IMR-90 (cell line): ENCODE measurements at regions of chr12 and their contacts with region 1.

Region 1: GRCh38 chr12:55738123-55739024 is 4.5 kb upstream of the GDF11 start:
- DNase-seq: peak; percentile 82
- ATAC-seq: peak; percentile 75
- H3K4me3 ChIP-seq: peak overlapping the region; percentile 68
- H3K27ac ChIP-seq: peak overlapping the region; percentile 47
- H3K4me1 ChIP-seq: peaks cover 6% of the 10 kb centered on the region
- H3K27me3 ChIP-seq: no peaks in the 10 kb centered on the region
- CTCF ChIP-seq: peak; percentile 93
- POLR2A ChIP-seq: no peak
- RAD21 ChIP-seq: peak; percentile 89

Region 2: DNA sequence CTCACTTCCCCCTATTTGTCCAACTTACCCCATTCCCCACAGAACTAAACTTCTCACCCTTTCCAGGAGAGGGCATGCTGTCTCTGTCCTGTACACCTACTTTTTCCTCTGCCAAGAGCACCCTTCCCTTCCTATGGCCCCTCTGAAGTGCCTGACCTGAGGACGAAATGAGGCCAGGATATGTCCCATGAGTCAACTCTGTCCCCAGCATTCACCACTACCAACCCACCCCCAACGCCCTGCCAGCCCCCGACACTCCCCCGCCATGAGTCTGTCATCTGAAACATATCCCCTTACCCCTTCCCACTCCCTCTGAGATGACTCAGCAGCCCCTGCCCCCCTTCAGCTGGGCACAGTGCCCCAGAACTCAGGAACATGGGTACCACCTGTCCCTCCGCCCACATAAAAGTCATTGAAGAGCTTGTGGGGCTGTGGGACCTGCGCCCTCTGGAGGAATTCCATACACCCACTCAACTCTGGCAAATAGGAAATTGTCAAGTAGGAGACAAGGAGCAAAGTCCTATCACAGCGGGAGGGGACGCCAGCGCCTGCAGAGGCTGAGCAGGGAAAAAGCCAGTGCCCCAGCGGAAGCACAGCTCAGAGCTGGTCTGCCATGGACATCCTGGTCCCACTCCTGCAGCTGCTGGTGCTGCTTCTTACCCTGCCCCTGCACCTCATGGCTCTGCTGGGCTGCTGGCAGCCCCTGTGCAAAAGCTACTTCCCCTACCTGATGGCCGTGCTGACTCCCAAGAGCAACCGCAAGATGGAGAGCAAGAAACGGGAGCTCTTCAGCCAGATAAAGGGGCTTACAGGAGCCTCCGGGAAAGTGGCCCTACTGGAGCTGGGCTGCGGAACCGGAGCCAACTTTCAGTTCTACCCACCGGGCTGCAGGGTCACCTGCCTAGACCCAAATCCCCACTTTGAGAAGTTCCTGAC is 57.0 kb before region 1 on chr12:
- CTCF ChIA-PET with region 1: interaction called, 3 read pairs
- POLR2A ChIA-PET with region 1: no interaction called
- dilution Hi-C with region 1: no loop called
- in situ Hi-C with region 1: no loop called
- intact Hi-C with region 1: loop called (anchors 1 kb)
- DNase-seq: peak; percentile 51
- ATAC-seq: peak; percentile 75
- H3K4me3 ChIP-seq: no peak overlapping the region
- H3K27ac ChIP-seq: no peak overlapping the region
- H3K4me1 ChIP-seq: peaks cover 2% of the 10 kb centered on the region
- H3K27me3 ChIP-seq: peaks cover 12% of the 10 kb centered on the region
- CTCF ChIP-seq: peak; percentile 35
- POLR2A ChIP-seq: no peak
- RAD21 ChIP-seq: peak; percentile 52

Region 3: GRCh38 chr12:55817346-55818139 is 79.2 kb after region 1 on chr12 and contains the starts of genes ORMDL2 and SARNP:
- CTCF ChIA-PET with region 1: interaction called, 4 read pairs
- POLR2A ChIA-PET with region 1: no interaction called
- dilution Hi-C with region 1: no loop called
- in situ Hi-C with region 1: no loop called
- intact Hi-C with region 1: loop called (anchors 5 kb)
- DNase-seq: peak; percentile 100
- ATAC-seq: peak; percentile 97
- H3K4me3 ChIP-seq: peak within 1 kb of the TSS; percentile 63
- H3K27ac ChIP-seq: peak within 1 kb of the TSS; percentile 84
- H3K4me1 ChIP-seq: peaks cover 7% of the 10 kb centered on the region
- H3K27me3 ChIP-seq: no peaks in the 10 kb centered on the region
- CTCF ChIP-seq: no peak
- POLR2A ChIP-seq: peak; percentile 74; the same call in 1 of the 2 replicates
- RAD21 ChIP-seq: no peak
- total RNA-seq, gene ORMDL2: 20.4 and 23.3 TPM in 2 replicates
- total RNA-seq, gene SARNP: 46.8 and 132 TPM in 2 replicates

Region 4: GRCh38 chr12:55940065-55940732 is 201.8 kb after region 1 on chr12:
- CTCF ChIA-PET with region 1: interaction called, 5 read pairs
- POLR2A ChIA-PET with region 1: no interaction called
- dilution Hi-C with region 1: no loop called
- in situ Hi-C with region 1: loop called (anchors 5 kb)
- intact Hi-C with region 1: loop called (anchors 1 kb)
- DNase-seq: peak; percentile 81
- ATAC-seq: peak; percentile 98
- H3K4me3 ChIP-seq: no peak overlapping the region
- H3K27ac ChIP-seq: no peak overlapping the region
- H3K4me1 ChIP-seq: peaks cover 4% of the 10 kb centered on the region
- H3K27me3 ChIP-seq: no peaks in the 10 kb centered on the region
- CTCF ChIP-seq: peak; percentile 90
- POLR2A ChIP-seq: no peak
- RAD21 ChIP-seq: peak; percentile 94

Region 5: DNA sequence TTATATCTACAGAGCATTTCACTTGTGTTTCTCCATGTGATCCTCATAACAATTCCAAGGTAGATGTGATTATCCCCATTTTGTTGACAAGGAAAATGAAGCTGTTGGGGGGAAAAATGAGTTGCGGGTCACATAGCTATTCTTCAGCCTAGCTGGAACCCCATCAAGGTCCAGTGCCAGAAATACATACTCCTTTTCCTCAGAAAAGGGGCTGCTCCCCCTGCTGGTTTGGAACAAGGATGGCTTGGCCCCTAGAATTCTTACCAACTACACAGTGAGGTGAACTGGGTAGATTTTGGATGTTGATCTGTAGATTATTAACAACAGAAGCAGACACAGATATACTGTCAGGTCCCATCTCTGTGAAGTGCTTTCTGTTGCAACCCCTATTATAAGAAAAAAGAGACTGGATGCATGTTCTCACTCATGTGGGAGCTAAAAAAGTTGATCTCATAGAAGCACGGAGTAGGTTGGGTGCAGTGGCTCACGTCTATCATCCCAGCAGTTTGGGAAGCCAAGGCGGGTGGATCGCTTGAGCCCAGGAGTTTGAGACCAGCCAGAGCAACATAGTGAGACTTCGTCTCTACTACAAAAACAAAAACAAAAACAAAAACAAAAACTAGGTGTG is 291.4 kb after region 1 on chr12:
- CTCF ChIA-PET with region 1: interaction called, 5 read pairs
- POLR2A ChIA-PET with region 1: no interaction called
- dilution Hi-C with region 1: no loop called
- in situ Hi-C with region 1: no loop called
- intact Hi-C with region 1: loop called (anchors 1 kb)
- DNase-seq: peak; percentile 67
- ATAC-seq: peak; percentile 96
- H3K4me3 ChIP-seq: no peak overlapping the region
- H3K27ac ChIP-seq: no peak overlapping the region
- H3K4me1 ChIP-seq: peaks cover 2% of the 10 kb centered on the region; the same call in 1 of the 2 replicates
- H3K27me3 ChIP-seq: no peaks in the 10 kb centered on the region
- CTCF ChIP-seq: peak; percentile 80
- POLR2A ChIP-seq: no peak
- RAD21 ChIP-seq: peak; percentile 72

Region 6: DNA sequence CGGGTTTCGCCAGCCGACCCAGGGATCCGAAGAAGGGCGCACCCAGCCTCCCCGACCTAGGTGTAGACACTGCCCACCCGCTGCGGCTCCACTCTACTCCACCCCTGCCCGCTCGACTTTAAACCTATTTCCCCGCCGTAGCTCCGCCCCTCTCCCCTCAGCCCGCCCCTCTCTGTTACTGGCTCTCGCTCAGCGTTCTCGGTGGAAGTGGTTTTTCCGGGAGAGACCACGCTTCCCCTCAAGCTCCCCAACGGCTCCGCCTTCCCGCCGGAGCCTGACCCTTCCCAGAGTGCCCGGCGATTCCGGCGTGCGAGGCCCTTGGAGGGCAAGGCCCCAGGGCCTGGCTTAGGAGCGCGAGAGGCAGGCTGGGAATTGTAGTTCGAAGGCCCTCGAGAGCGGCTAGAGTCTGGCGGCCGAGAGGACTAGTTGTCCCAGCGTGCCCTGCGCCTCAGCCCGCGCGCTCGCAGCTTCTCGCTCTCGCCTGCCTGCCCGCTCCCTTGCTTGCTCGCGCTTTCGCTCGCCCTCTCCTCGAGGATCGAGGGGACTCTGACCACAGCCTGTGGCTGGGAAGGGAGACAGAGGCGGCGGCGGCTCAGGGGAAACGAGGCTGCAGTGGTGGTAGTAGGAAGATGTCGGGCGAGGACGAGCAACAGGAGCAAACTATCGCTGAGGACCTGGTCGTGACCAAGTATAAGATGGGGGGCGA is 365.9 kb after region 1 on chr12 and contains the start of gene PA2G4:
- CTCF ChIA-PET with region 1: no interaction called
- POLR2A ChIA-PET with region 1: no interaction called
- dilution Hi-C with region 1: no loop called
- in situ Hi-C with region 1: no loop called
- intact Hi-C with region 1: loop called (anchors 1 kb)
- DNase-seq: peak; percentile 98
- ATAC-seq: peak; percentile 97
- H3K4me3 ChIP-seq: peak within 1 kb of the TSS; percentile 88
- H3K27ac ChIP-seq: peak within 1 kb of the TSS; percentile 94
- H3K4me1 ChIP-seq: peaks cover 5% of the 10 kb centered on the region; the same call in 1 of the 2 replicates
- H3K27me3 ChIP-seq: no peaks in the 10 kb centered on the region
- CTCF ChIP-seq: no peak
- POLR2A ChIP-seq: peak; percentile 70
- RAD21 ChIP-seq: no peak; the same call in 1 of the 2 replicates
- total RNA-seq, gene PA2G4: 198 and 251 TPM in 2 replicates